ENCODE measurements at regions of chr16 and their contacts with region 1.

Region 1: GRCh38 chr16:27387724-27388123 is 14.2 kb upstream of the IL21R start:
- DNase-seq: no peak
- H3K4me3 Mint-ChIP-seq: no peak overlapping the region
- H3K27ac Mint-ChIP-seq: no peak overlapping the region
- H3K4me1 Mint-ChIP-seq: no peaks in the 10 kb centered on the region
- H3K27me3 Mint-ChIP-seq: peaks cover 42% of the 10 kb centered on the region
- CTCF ChIP-seq: no peak

Region 2: DNA sequence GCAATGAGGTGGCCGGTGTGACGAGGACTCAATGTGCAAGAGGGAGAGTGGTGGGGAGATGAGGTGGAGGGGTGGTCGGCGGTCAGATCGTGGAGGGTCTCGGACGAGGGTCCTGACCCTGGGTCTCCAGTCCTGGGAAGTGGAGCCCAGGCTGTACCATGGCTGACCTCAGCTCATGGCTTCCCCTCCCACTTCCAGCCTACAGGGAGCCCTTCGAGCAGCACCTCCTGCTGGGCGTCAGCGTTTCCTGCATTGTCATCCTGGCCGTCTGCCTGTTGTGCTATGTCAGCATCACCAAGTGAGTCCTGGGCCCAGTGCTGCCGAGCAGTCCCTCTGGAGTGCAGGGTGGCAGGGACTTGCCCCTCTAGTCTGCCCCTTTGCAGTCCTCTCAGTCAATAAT is 32.1 kb before region 1 on chr16:
- CTCF ChIA-PET with region 1: no interaction called
- POLR2A ChIA-PET with region 1: no interaction called
- intact Hi-C with region 1: no loop called
- DNase-seq: peak; percentile 52
- H3K4me3 Mint-ChIP-seq: no peak overlapping the region
- H3K27ac Mint-ChIP-seq: no peak overlapping the region
- H3K4me1 Mint-ChIP-seq: no peaks in the 10 kb centered on the region
- H3K27me3 Mint-ChIP-seq: no peaks in the 10 kb centered on the region
- CTCF ChIP-seq: peak; percentile 24

Region 3: DNA sequence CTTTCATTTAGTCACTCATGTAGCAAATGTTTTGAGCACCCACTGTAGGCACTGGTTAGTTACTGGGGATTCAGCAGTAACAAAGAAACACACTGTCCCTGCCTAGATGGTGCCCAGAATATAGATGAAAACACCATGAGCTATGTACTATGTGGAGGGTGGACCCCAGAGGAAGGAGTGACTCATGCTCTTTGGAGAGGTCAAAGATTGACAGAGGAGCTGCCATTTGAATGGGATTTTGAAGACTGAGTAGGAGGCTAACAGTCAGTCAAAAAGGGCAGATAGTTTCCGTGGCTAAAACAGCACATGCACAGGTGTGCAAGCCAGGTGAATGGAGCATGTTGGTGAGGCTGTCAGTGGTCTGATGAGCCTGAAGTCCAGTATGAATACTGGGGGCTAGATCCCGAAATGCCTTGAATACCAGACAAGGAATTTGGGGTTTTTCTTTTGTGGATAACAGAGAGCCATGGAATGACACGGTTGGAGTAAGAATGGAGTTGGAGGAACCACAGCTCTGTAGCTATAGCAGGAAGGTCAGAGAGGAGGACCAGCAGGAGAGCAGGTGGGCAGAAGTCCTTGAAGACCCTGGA is 20.4 kb after region 1 on chr16:
- CTCF ChIA-PET with region 1: interaction called, 10 read pairs
- POLR2A ChIA-PET with region 1: no interaction called
- intact Hi-C with region 1: no loop called
- DNase-seq: no peak
- H3K4me3 Mint-ChIP-seq: no peak overlapping the region
- H3K27ac Mint-ChIP-seq: no peak overlapping the region
- H3K4me1 Mint-ChIP-seq: peaks cover 12% of the 10 kb centered on the region
- H3K27me3 Mint-ChIP-seq: peaks cover 13% of the 10 kb centered on the region
- CTCF ChIP-seq: no peak

Measured in MCF 10A (cell line).